ENCODE measurements at regions of chr1 and their contacts with region 1.

Region 1: DNA sequence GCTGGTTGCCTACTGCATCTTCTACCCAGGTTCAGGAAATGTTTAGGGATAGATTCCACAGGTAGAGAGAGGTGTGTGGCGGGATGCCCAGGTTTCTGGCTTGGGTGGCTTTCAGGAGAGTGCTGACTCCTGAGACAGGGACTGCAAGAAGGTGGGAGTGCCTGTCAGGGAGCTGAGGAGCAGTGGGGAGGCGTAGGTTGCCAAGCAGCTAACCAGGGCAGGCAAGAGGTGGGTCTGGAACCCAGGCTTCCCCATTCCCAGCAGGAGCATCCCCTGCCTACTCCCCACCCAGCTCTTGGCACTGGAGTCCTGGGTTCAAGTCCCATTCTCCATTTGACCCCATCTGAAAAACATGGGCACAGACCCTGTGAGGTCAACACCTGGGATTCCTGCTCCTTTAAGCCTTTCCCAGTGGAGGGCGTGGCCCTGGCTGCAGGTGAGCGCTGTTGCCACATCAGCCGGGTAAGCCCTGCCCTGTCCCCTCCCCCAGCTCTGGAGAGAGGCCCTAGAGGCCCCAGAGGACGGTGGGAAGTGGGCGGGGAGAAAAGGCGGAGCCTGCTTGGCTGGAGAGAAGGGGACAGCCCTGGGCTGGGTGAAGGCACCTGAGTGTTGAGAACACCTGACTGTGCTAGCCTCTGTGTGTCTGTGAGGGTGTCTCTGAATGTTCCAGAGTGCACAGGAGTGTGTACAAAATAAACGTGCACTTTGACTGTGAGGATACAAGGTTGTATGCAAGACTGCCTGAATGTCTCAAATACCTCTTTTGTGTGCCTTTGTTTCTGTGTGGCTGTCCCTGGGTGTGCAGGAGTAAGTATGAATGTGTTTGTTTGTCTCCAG is 14.0 kb upstream of the SYNC start:
- DNase-seq: no peak
- H3K4me3 ChIP-seq: no peak overlapping the region
- H3K27ac ChIP-seq: no peak overlapping the region
- H3K4me1 ChIP-seq: no peaks in the 10 kb centered on the region
- H3K27me3 ChIP-seq: no peaks in the 10 kb centered on the region
- CTCF ChIP-seq: no peak
- POLR2A ChIP-seq: no peak

Region 2: GRCh38 chr1:32702599-32703478 is 13.7 kb before region 1 on chr1 and contains the start of gene SYNC:
- CTCF ChIA-PET with region 1: interaction called, 21 read pairs
- POLR2A ChIA-PET with region 1: interaction called, 6 read pairs
- dilution Hi-C with region 1: no loop called
- intact Hi-C with region 1: no loop called
- DNase-seq: no peak
- H3K4me3 ChIP-seq: peak within 1 kb of the TSS; percentile 63 to 81 (median 75)
- H3K27ac ChIP-seq: no peak within 1 kb of the TSS
- H3K4me1 ChIP-seq: peaks cover 11% of the 10 kb centered on the region
- H3K27me3 ChIP-seq: no peaks in the 10 kb centered on the region
- CTCF ChIP-seq: no peak
- POLR2A ChIP-seq: peak; percentile 47
- total RNA-seq, gene SYNC: 6.5 and 9.4 TPM in 2 replicates

Region 3: DNA sequence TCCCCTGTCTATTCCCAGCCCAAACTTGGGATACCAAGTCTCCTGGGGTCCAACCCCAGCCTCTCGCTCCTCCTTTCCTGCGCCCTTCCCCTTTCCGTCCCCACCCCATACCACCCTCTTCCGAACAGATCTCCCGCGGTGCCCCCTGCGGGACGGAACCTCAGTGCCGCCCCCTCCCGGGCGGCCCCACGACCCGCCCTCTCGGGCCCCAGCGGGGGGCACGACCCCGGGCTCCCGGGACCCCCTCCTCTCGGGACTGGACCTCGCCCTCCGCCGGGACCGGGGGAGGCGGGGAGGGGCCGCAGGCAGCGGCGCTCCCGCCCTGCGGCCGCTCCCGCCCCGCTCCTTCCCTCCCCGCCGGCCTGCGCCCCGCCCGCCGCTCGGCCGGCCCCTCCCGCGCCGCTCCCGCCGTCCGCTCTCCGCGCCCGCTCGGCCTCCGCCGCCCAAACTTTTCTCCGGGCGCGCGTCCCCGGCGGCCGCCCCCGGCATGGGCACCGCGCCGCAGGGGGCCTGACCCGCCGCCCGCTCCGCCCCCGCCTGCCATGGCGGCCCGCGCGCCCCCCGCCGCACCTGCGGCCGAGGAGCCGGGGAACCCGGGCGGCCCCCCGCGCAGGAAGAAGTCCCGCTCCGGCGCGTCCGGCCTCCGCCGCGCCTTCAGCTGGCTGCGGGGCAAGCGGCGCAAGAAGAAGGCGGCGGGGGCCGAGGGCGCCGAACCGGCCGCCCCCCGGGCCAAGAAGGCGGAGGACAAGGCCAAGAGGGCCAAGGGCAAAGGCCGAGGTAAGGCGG is 25.1 kb after region 1 on chr1:
- CTCF ChIA-PET with region 1: interaction called, 22 read pairs
- POLR2A ChIA-PET with region 1: no interaction called
- dilution Hi-C with region 1: no loop called
- intact Hi-C with region 1: loop called (anchors 1 kb)
- DNase-seq: no peak
- H3K4me3 ChIP-seq: peak overlapping the region; percentile 63 to 78 (median 64)
- H3K27ac ChIP-seq: no peak overlapping the region
- H3K4me1 ChIP-seq: peaks cover 16% of the 10 kb centered on the region
- H3K27me3 ChIP-seq: no peaks in the 10 kb centered on the region
- CTCF ChIP-seq: peak; percentile 46 to 56
- POLR2A ChIP-seq: no peak

Region 4: GRCh38 chr1:32761253-32761880 is 44.8 kb after region 1 on chr1:
- CTCF ChIA-PET with region 1: interaction called, 392 read pairs
- POLR2A ChIA-PET with region 1: no interaction called
- dilution Hi-C with region 1: no loop called
- intact Hi-C with region 1: no loop called
- DNase-seq: peak; percentile 75
- H3K4me3 ChIP-seq: no peak overlapping the region
- H3K27ac ChIP-seq: no peak overlapping the region
- H3K4me1 ChIP-seq: no peaks in the 10 kb centered on the region
- H3K27me3 ChIP-seq: no peaks in the 10 kb centered on the region
- CTCF ChIP-seq: no peak
- POLR2A ChIP-seq: no peak

Region 5: DNA sequence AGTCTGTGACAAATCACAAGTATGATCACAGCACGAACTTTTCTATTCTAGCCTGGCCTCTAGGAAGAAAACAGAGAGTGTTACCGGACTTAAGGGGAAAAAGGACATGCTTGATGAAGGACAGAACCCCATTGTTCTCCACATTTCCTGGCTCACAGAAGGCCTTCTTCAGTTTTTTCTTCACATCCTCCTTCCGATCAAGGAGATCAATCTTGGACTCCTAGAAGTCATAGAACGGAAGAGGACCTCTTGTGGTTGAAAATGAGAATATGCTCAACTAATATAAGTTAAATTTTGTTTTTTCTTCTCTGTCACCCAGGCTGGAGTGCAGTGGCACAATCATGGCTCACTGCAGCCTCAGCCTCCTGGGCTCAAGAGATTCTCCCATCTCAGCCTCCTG is 70.3 kb after region 1 on chr1:
- CTCF ChIA-PET with region 1: interaction called, 24 read pairs
- POLR2A ChIA-PET with region 1: no interaction called
- dilution Hi-C with region 1: no loop called
- intact Hi-C with region 1: loop called (anchors 1 kb)
- DNase-seq: peak; percentile 65
- H3K4me3 ChIP-seq: no peak overlapping the region
- H3K27ac ChIP-seq: no peak overlapping the region
- H3K4me1 ChIP-seq: peaks cover 18% of the 10 kb centered on the region
- H3K27me3 ChIP-seq: no peaks in the 10 kb centered on the region
- CTCF ChIP-seq: peak; percentile 24 to 40
- POLR2A ChIP-seq: no peak

Region 6: GRCh38 chr1:32870615-32871363 is 154.3 kb after region 1 on chr1 and contains the start of gene FNDC5:
- CTCF ChIA-PET with region 1: interaction called, 32 read pairs
- POLR2A ChIA-PET with region 1: no interaction called
- dilution Hi-C with region 1: no loop called
- intact Hi-C with region 1: loop called (anchors 1 kb)
- DNase-seq: no peak
- H3K4me3 ChIP-seq: peak within 1 kb of the TSS in 1 of 3 experiments; percentile 36
- H3K27ac ChIP-seq: no peak within 1 kb of the TSS
- H3K4me1 ChIP-seq: no peaks in the 10 kb centered on the region
- H3K27me3 ChIP-seq: peaks cover 14 to 17% of the 10 kb centered on the region in 2 experiments
- CTCF ChIP-seq: no peak
- POLR2A ChIP-seq: no peak
- total RNA-seq, gene FNDC5: 0.64 TPM in 1 of 2 replicates, not detected in the other

Region 7: DNA sequence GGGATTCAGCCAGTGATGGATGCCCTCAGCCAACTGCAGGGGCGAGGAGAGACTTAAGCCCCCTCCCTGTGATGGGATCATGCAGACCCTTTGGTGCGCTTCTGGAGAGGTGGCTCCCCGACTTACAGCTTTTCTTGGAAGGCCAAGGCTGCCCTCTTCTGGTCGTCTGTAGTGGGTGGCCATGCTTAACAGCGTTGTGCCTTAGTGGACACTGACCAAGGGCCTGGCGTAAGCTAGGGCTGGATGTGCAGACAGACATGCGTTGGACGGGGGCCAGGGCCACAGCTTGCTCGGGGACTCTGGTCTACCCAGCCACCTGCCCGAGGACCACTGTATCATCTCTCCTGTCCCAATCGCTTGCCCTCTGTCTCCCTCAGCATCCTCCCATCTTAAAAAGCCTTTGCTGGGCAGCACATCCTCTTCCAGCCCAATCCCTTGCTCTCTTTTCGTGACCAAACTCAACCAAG is 369.9 kb after region 1 on chr1:
- CTCF ChIA-PET with region 1: interaction called, 11 read pairs
- POLR2A ChIA-PET with region 1: no interaction called
- dilution Hi-C with region 1: no loop called
- intact Hi-C with region 1: loop called (anchors 1 kb)
- DNase-seq: peak; percentile 77
- H3K4me3 ChIP-seq: no peak overlapping the region
- H3K27ac ChIP-seq: no peak overlapping the region
- H3K4me1 ChIP-seq: peaks cover 3% of the 10 kb centered on the region
- H3K27me3 ChIP-seq: peaks cover 11 to 22% of the 10 kb centered on the region in 2 experiments
- CTCF ChIP-seq: peak; percentile 71 to 91
- POLR2A ChIP-seq: no peak